Cardiac septum (tissue), 1 donor: ENCODE measurements at regions of chr12 and their contacts with region 1.

Region 1: DNA sequence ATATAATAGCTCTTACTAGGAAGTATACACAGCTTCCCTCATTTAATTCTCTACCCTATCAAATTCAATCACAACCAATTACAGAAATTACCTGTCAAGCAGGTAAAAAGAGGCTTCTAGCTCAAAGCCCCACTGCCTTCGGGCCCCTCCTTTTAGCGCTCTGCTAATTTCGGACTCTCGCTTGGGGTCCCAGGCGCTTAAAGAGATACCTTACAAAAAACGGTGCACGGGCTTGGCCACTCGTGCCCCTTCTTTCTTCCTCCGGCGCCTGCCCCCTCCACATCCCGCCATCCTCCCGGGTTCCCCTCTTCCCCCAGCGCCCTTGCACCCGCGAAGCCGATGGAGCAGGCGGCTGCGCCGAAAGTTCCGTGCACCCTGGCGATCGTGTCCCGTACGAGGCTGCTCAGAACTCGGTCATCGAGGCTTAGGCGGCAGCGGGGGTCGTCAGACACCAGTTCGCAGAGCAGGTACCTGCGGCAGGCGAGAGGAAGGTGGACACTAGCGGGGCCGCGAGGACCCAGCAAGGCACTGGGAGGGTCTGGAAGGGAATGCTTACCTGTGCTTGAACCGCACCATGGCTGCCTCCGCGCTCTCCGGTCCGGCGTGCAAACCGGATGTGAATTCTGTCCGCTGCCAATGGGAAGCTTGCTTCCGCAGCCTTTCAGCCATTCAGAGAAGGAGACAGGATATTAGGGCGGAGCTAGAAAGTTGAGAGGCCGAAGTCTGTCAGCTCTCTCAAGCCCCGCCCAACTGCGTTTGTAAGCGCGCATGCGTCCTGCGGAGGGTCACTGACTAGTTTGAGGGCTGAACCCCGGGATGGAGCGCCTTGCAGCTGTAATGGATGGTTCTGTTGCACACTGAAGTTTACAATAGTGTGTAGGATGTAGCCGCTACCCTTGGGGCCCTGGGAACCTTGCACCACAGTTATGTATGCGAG is at the start of gene POP5:
- DNase-seq: peak; percentile 98
- total RNA-seq, gene POP5: 36.5 TPM

Region 2: GRCh38 chr12:120534203-120534702 is 46.8 kb before region 1 on chr12 and contains the start of gene RNF10:
- intact Hi-C with region 1: loop called (anchors 5 kb)
- DNase-seq: peak; percentile 87
- total RNA-seq, gene RNF10: 249 TPM

Region 3: GRCh38 chr12:120546050-120546386 is 35.0 kb before region 1 on chr12:
- intact Hi-C with region 1: no loop called
- DNase-seq: no peak

Region 4: GRCh38 chr12:120649442-120650232 is 68.6 kb after region 1 on chr12:
- intact Hi-C with region 1: loop called (anchors 5 kb)
- DNase-seq: no peak

Region 5: DNA sequence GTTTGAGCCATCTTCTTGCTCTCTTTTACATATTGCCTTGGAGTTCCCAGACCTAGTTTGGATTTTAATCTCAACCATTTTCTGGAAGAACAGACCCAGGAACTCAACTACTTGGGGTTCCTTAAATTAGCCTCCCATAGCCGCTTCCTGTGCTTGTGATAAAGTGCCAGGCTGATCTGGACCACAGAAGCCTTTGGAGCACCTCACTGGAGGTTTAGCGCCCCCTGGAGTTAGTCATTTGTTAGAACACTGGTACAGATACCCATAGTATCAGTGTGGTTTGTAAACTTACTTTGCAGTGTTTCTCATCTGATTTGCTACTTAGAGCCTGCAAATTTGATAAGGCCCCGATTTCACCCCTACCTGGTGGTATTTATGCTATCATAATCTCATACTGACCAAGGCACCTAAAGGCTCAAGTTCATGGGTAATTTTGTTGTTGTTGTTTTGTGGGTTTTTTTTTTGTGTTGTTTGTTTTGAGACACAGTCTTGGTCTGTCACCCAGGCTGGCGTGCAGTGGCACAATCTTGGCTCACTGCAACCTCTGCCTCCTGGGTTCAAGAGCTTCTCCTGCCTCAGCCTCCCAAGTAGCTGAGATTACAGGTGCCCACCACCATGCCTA is 132.9 kb after region 1 on chr12:
- intact Hi-C with region 1: loop called (anchors 2 kb)
- DNase-seq: no peak

Region 6: GRCh38 chr12:120971299-120972179 is 390.5 kb after region 1 on chr12:
- intact Hi-C with region 1: loop called (anchors 5 kb)
- DNase-seq: no peak

Region 7: DNA sequence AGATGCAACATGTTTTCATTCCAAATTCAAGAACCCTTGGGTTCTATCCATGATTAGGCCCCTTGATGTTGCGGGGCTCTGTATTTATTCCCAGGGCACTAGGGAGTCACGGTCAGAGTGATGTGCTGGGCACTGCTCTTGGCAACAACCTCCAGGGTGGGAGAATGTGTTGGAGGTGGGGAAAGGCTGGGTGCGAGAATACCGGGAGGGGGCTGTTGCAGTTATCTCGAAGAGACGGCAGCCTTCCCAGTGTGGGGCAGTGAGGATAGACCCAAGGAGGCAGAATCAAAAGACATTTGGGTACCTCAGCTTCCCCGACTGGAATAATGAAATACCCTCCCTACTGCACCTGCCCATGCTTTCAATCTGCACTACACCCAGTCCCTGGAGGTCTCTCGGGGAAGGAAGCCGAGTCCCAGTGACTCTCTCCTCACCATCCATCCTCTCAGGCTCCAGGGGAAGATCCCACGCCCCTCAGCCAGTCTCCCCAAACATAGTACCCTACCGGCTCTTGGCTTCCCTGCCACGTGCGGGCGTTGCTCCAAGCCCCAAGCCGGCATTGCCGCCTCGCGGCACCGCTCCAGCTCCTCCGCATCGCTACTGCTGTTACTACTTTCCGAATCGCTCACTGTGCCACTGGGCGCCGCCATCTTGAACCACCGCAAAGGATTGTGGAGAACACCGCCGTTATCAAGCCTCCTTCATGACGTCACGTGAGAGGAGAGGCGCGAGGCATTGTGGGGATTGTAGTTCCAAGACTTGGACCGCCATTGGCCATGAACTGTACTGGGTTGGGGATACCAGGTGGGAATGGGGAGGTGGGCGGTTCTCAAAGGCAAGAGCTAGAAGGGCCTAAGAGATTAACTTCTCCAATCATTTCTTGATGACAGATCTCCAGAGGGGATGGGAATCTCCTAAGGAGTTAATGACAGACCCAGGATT is 435.0 kb after region 1 on chr12 and contains the start of gene C12orf43:
- intact Hi-C with region 1: no loop called
- DNase-seq: peak; percentile 97
- total RNA-seq, gene C12orf43: 9.1 TPM

Region 8: DNA sequence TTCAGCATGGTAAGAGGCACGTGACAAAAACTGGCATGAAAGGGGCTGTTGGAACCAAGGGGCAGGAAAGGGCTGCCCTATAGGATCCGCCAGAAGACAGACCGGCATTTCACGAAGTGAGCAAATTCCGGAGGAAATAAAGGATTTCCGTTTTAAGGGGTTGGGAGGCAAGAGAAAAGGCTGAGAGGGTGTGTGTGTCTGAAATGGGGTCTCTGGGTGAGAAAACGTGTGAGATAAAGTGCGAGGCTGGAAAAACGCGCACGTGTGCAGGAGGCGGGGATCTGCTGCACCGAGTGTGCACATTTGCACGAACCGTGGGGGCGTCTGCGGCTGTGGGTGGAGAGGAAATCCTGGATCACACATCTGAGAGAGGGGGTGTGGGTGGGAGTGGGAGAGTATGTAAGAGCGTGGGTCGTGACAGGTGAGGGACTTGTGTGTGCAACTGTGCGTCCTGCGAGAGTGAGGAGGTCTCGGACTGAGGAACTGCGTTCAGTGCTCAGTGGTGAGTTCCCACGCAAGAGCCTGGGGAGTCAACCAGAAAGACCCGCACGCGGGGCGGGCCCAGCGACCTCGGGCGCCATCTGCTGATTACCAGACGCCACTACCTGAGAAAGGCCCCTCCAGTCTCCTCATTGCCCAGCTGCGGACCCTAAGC is 514.6 kb after region 1 on chr12:
- intact Hi-C with region 1: loop called (anchors 10 kb)
- DNase-seq: peak; percentile 87